HEK293T (cell line): ENCODE measurements at regions of chr11 and their contacts with region 1.

Region 1: DNA sequence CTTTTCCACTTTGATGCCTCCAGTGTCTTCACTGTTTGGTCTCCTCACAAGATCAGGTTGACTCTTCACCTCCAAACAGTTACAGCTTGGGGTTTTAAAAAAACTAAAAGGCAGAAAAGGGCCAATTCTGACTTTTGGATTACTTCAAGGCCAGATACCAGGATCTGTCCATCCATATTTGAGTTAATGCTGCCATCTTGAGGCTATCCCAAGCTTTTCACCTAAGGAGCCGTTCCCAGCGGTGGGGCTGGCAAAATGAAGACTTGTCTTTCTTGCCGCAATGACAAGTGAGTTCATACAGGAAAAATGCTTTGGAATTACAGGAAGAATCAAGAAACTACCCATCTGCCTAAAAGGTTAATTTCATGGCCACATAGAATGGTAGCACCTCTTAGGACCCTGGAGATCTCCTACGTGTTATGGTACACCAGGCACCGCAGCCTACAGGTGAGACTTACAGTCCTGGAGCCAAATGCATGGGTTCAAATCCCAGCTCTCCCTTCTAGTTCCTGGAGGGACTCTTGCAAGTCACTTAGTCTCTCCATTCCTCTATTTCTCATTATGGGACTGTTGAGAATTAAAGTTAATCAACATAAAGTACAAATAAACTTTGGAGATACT is 6.0 kb upstream of the OR5B21 start:
- DNase-seq: peak; percentile 54

Region 2: DNA sequence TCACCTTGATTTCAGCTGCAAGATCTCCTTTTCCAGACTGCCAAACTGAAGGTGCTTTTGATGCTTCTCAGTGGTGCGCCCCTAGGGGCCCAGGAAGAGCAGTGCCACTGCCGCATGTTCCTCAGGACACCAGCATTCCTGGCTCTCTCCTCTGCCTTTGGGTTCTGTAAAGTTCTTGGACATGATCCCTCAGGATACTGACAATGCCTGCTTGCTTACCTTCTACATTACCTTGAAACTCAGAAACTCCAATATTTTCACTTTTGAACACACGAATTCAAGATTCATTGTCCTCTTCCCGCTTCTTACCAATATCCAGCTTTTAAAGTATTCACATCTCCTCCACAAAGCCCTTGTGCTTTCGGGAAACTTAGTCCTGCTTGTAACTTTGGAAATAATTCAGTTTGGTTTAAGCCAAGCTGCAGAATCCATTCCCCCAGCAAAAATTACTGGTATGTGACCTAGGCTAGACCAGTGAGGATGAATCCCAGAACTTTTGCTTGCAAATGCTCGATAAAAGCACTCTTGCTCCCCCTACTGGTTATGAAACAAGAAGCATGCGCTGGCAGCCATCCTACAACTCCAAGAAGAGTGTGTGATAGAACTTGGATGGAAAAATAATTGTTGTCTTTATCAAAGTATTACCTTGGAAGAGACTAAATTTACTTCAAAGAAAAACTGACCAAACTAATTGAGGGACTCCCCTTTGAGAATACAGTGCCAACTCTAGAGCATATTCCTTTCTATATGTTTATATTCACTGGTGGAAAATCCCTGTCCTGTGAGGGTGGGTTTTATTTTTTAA is 10.6 kb after region 1 on chr11:
- CTCF ChIA-PET with region 1: interaction called, 16 read pairs
- POLR2A ChIA-PET with region 1: no interaction called
- DNase-seq: peak; percentile 65

Region 3: GRCh38 chr11:58609723-58610122 is 95.9 kb after region 1 on chr11:
- CTCF ChIA-PET with region 1: no interaction called
- POLR2A ChIA-PET with region 1: no interaction called
- DNase-seq: no peak